ENCODE measurements at regions of chr9 and their contacts with region 1.

Region 1: DNA sequence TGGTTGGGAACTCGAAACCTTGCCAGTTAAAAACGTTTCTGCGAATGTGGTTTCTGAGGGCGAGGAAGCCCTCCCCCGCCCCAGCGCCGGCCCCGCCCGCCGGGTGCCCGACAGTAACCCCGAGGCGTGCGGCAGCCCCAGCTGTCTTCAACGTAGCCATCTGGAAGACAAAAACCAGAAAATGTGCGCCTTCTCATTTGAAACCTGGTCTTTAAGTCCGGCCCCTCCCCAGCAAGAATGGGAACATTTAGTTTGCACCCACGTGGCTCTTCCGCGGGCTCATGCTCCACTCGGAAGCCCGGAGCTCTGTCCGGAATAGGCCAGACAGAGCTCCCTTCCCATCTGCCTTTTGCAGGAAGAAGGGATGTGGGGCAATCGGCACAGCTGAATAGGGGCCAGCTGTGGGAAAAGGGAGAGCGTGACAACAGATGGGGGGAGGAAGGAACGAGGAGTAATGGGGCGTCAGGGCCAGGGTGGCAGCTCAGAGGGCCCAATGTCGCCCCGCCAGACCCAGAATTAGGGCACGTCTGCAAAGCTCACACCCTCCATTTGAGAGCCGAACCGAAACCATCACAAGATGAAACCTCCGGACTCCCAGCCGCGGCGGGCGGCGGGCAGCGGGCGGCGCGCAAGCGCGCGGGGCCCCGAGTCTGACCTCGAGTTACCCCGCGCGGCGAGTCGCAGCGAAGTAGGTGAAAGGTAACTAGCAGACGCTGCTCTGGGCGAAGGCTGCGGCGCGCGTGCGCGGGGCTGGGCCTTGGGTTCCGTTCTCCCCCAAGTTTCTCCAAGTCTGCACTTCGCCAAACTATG is 63.4 kb upstream of the ABCA1 start:
- DNase-seq: peak; percentile 93
- ATAC-seq: peak; percentile 73
- H3K4me3 Mint-ChIP-seq: peak overlapping the region; percentile 80
- H3K27ac Mint-ChIP-seq: peak overlapping the region; percentile 98
- H3K4me1 Mint-ChIP-seq: peaks cover 37% of the 10 kb centered on the region
- H3K27me3 Mint-ChIP-seq: peaks cover 29% of the 10 kb centered on the region

Region 2: DNA sequence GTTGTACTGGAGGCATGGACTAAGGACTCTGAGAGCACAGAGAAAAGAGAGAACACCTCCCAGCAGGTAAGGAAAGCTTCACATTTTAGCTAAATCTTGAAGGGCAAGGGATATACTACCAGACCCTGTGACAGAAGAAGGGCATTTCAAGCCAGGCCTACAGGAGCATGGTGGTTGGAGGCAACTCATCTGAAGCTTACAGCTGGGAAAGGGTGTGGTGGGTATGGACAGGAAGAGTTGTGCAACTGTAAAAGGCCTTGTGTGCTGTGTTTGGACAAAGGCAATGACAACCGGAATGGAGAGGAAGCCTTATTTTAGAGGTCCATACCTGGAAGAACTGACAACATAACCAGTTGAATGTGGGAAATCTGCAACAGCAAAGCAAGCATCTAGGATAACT is 196.3 kb before region 1 on chr9:
- CTCF ChIA-PET with region 1: no interaction called
- POLR2A ChIA-PET with region 1: no interaction called
- intact Hi-C with region 1: no loop called
- DNase-seq: no peak
- ATAC-seq: no peak
- H3K4me3 Mint-ChIP-seq: no peak overlapping the region
- H3K27ac Mint-ChIP-seq: no peak overlapping the region
- H3K4me1 Mint-ChIP-seq: peaks cover 5% of the 10 kb centered on the region
- H3K27me3 Mint-ChIP-seq: no peaks in the 10 kb centered on the region

Region 3: DNA sequence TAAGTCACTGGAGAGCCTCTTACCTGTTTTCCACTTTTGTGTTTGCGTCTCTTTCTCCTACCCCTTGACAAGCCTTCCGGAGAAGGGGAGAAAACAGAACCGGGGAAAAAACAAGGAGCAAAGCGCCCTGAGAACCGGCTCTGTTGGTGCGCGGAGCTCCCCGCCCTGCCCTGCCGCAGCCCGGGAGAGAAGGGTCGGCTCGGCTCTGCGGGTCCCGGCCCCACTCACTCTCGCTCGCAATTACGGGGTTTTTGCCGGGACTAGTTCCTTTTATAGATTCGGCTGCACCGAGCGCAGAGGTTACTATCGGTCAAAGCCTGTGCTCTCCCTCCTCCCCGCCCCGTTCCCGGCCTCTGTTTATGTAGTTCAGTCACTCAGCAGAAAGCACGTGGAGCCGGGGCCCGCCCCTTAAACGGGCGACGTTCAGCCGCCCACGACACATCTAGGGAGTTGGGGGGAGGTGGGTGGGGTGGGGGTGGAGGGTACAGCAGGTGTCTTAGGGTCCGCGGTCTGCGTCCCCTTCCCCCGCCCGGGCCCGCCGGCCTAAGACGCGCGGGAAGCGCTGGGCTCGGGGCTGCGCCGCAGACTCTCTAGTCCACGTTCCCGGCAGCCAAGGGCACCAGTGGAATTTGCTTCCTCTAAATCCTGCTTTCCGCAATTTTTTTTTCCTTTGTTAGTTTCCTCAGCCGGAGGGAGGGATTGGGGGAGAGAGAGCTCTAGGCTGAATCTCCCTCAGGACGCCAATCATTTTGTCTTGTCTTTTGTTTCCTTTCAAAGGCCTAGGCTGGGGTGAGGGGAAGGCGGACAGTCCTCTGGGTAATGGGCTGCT is 63.2 kb before region 1 on chr9 and contains the start of gene ABCA1:
- CTCF ChIA-PET with region 1: interaction called, 4 read pairs
- POLR2A ChIA-PET with region 1: interaction called, 16 read pairs
- intact Hi-C with region 1: loop called (anchors 1 to 2 kb)
- DNase-seq: peak; percentile 90
- ATAC-seq: peak; percentile 71
- H3K4me3 Mint-ChIP-seq: peak within 1 kb of the TSS; percentile 79
- H3K27ac Mint-ChIP-seq: peak within 1 kb of the TSS; percentile 73
- H3K4me1 Mint-ChIP-seq: peaks cover 21% of the 10 kb centered on the region
- H3K27me3 Mint-ChIP-seq: peaks cover 5% of the 10 kb centered on the region
- total RNA-seq, gene ABCA1: 4.5 to 5.2 TPM

Region 4: DNA sequence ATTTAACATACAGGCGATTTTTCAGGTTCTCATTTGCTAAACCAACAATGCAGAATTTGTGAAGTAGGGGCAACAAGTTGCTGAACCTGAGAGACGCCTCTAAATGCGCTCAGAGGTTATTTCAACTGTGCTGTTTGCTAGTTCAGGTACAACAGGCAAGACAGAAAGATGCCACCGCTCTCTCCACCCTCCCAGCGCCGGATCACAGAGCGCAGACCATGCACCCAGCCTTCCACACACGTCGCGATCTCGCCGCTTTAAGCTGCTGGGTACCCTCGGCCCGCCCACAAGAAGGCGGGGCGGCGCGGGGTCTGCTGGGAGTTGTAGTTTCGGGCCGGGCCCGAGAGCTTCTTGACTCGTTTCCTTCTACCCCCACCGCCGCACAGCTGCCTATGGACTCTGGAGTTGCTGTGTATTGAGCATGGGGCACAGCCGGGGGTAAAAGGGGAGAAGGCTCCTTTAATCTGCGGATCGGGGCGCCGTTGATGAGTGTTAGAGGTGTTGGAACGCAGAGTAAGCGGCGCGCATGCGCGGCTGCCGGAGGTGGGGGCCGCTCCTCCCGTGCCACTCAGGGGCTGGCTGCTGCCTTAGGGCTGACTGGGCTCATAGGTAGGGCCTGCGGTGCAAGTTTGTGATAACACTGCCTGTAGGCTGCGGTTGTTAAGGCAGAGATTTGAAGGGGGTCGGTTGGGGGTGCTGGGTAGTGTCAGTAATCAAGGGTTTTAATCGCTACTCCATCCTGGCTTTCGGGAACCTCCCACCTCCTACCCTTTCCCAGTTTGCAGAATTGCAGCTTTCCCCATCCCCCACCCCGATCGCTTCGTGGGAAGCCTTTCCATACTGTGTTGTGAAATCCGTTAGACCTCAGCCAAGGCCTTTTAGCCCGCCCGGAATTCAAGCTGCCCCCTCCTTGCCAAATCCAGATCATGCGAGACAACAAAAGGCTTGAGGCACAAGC is 23.0 kb before region 1 on chr9:
- CTCF ChIA-PET with region 1: interaction called, 3 read pairs
- POLR2A ChIA-PET with region 1: interaction called, 8 read pairs
- intact Hi-C with region 1: loop called (anchors 1 to 2 kb)
- DNase-seq: peak; percentile 94
- ATAC-seq: peak; percentile 99
- H3K4me3 Mint-ChIP-seq: peak overlapping the region; percentile 86
- H3K27ac Mint-ChIP-seq: peak overlapping the region; percentile 92
- H3K4me1 Mint-ChIP-seq: peaks cover 13% of the 10 kb centered on the region
- H3K27me3 Mint-ChIP-seq: peaks cover 9% of the 10 kb centered on the region

Region 5: DNA sequence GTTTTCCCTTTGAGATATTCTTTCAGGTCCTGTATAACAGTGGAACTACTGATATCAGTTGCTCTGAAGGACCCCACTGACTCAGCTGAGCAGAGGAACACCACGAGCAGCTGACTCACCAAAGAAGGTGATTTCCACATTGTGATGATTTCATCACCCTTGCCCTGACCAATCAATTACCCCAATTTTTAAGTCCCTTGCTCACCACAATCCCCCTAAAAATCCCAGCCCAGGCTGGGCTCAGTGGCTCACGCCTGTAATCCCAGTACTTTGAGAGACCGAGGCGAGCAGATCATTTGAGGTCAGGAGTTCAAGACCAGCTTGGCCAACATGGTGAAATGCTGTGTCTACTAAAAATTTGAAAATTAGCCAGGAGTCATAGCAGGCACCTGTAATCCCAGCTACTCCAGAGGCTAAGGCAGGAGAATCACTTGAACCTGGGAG is 61.9 kb after region 1 on chr9:
- CTCF ChIA-PET with region 1: interaction called, 3 read pairs
- POLR2A ChIA-PET with region 1: no interaction called
- intact Hi-C with region 1: loop called (anchors 1 kb)
- DNase-seq: peak; percentile 85
- ATAC-seq: peak; percentile 95
- H3K4me3 Mint-ChIP-seq: peak overlapping the region; percentile 27
- H3K27ac Mint-ChIP-seq: peak overlapping the region; percentile 88
- H3K4me1 Mint-ChIP-seq: peaks cover 43% of the 10 kb centered on the region
- H3K27me3 Mint-ChIP-seq: no peaks in the 10 kb centered on the region

Region 6: DNA sequence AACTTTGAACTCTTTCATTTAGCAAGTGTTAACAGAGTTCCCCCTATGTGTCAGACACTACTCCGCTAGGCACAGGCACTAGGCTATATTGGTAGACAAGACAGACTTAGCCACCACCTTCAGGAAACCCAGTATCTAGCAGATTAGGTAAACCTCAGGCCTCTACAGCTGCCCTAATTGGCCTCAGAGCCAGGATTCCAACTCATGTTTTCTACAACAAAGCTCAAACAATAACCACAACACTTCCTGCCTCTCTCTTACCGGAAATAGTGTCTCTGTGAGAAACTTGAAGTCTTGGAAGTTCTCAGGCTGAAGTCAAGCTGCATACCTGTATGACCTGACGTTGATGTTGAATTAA is 136.5 kb after region 1 on chr9:
- CTCF ChIA-PET with region 1: no interaction called
- POLR2A ChIA-PET with region 1: no interaction called
- intact Hi-C with region 1: loop called (anchors 1 to 5 kb)
- DNase-seq: peak; percentile 62
- ATAC-seq: peak; percentile 99
- H3K4me3 Mint-ChIP-seq: no peak overlapping the region
- H3K27ac Mint-ChIP-seq: peak overlapping the region; percentile 59
- H3K4me1 Mint-ChIP-seq: peaks cover 52% of the 10 kb centered on the region
- H3K27me3 Mint-ChIP-seq: no peaks in the 10 kb centered on the region

Region 7: DNA sequence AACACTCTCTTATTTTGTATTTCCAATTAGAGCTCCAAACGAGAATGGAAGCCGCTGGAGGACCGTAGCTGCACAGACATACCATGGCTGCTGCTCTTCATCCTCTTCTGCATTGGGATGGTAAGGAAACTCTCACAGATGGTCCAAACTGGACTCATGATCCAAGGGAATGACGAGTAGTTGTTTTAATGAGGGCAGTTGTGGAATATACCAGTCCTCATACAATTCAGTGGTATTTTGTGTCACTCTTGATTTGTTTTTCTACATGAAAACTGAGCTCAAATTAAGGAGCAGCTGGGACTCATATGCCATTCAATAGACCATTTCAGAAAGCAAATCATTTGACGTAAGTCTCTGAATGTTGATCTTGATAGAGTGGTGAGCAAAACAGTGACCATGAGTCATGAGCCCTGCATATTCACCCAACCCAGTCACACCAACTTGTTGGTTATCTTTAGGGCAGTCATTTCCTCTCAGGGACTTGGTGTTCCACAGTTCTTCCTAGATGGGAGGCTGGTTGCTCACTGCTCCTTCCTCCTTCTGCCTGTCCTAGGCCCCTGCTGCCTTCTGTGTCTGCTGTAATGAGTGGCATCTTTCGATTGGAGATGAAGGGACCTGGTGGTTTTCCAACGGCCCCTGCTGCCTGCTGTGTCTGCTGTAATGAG is 308.0 kb after region 1 on chr9:
- CTCF ChIA-PET with region 1: no interaction called
- POLR2A ChIA-PET with region 1: no interaction called
- intact Hi-C with region 1: no loop called
- DNase-seq: peak; percentile 34
- ATAC-seq: peak; percentile 80
- H3K4me3 Mint-ChIP-seq: no peak overlapping the region
- H3K27ac Mint-ChIP-seq: no peak overlapping the region
- H3K4me1 Mint-ChIP-seq: peaks cover 14% of the 10 kb centered on the region
- H3K27me3 Mint-ChIP-seq: no peaks in the 10 kb centered on the region

Region 8: DNA sequence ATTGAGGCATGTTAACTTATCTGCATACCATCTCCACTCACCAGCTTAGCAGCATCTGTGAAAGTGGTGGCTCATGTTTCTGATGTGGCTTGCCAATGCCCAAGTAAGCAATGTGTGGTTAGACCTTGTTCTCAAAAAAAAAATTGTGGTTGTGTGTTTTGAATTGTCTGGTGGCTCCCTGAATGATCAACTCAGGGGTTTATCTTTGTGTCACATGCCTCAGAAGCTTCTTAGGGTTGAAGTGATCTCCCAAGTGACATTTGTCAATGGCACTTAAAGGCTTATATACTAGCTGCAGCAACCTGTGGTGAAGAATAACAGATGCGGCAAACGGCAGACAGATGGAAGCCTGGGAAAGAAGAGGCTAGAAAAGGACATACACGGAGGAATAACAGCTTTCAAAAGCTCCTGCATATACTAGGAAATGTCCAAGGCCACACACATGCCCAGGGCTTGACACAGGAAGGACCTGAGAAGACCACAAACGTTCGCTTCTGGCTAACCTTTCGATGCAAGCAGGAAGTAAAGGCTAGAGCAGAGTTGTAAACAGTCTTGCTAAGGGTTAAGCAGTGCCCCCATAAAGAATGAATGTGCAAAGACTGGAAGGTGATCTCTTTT is 414.3 kb after region 1 on chr9:
- CTCF ChIA-PET with region 1: no interaction called
- POLR2A ChIA-PET with region 1: no interaction called
- intact Hi-C with region 1: loop called in 1 of 2 experiments (anchors 2 kb)
- DNase-seq: peak; percentile 69
- ATAC-seq: peak; percentile 92
- H3K4me3 Mint-ChIP-seq: peak overlapping the region; percentile 21
- H3K27ac Mint-ChIP-seq: peak overlapping the region; percentile 3
- H3K4me1 Mint-ChIP-seq: peaks cover 27% of the 10 kb centered on the region
- H3K27me3 Mint-ChIP-seq: peaks cover 66% of the 10 kb centered on the region